ENCODE measurements at regions of chr19 and their contacts with region 1.

Region 1: DNA sequence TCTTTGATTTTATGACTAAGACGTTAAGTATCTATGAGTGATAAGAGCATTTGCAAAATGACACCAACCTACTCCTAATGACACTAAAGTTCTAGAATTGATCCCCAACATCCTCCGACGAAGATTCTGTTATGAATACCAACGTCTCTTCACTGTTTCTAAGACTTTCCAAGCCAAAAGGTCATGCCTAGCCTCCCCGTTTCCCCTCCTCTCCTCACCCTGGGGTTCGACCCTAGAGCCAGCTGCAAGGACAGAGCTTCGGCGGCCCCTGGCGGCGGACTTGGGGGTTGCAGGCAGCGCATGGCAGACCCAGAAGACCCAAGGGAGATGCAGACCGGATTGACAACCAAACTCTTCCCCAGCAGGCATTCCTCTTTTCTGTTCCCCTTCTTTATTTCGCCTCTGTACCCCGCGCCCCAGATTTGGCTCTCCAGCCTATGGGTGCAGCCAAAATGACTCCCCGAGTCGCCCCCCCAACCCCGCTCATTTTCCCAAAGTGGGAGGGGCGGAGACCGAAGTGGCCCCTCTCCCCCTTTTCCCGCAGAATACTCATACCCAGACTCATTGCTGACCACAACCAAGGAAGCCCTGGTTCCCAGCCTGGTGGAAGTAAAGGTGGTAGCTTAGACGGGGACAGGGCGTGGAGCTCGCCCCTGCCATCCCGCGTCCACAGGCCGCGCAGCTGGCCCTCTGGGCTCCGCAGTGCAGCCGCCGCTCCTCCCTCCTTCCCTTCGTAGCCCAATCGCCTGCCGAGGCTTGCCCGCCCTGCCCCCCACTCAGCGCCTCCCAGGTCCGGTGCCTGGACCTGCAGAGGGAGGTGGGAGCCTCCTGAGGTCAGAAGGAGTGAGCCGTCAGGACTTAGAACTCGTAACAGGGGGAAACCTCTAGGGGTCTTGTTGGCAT is 4.1 kb upstream of the EML2 start:
- DNase-seq: peak; percentile 96
- ATAC-seq: peak; percentile 40
- H3K4me3 Mint-ChIP-seq: peak overlapping the region; percentile 86
- H3K27ac Mint-ChIP-seq: peak overlapping the region; percentile 93
- H3K4me1 Mint-ChIP-seq: peaks cover 40% of the 10 kb centered on the region
- H3K27me3 Mint-ChIP-seq: peaks cover 24% of the 10 kb centered on the region
- CTCF ChIP-seq: peak; percentile 99

Region 2: GRCh38 chr19:45478454-45479238 is 164.6 kb before region 1 on chr19:
- CTCF ChIA-PET with region 1: interaction called, 43 read pairs
- POLR2A ChIA-PET with region 1: no interaction called
- DNase-seq: peak; percentile 90
- ATAC-seq: peak; percentile 94
- H3K4me3 Mint-ChIP-seq: peak overlapping the region; percentile 69
- H3K27ac Mint-ChIP-seq: peak overlapping the region; percentile 99
- H3K4me1 Mint-ChIP-seq: peaks cover 23% of the 10 kb centered on the region
- H3K27me3 Mint-ChIP-seq: peaks cover 47% of the 10 kb centered on the region
- CTCF ChIP-seq: peak; percentile 90

Region 3: GRCh38 chr19:45558399-45558878 is 84.8 kb before region 1 on chr19:
- CTCF ChIA-PET with region 1: interaction called, 57 read pairs
- POLR2A ChIA-PET with region 1: interaction called, 3 read pairs
- DNase-seq: peak; percentile 78
- ATAC-seq: peak; percentile 89
- H3K4me3 Mint-ChIP-seq: no peak overlapping the region
- H3K27ac Mint-ChIP-seq: no peak overlapping the region
- H3K4me1 Mint-ChIP-seq: peaks cover 12% of the 10 kb centered on the region; the same call in 1 of the 2 replicates
- H3K27me3 Mint-ChIP-seq: no peaks in the 10 kb centered on the region
- CTCF ChIP-seq: no peak

Region 4: DNA sequence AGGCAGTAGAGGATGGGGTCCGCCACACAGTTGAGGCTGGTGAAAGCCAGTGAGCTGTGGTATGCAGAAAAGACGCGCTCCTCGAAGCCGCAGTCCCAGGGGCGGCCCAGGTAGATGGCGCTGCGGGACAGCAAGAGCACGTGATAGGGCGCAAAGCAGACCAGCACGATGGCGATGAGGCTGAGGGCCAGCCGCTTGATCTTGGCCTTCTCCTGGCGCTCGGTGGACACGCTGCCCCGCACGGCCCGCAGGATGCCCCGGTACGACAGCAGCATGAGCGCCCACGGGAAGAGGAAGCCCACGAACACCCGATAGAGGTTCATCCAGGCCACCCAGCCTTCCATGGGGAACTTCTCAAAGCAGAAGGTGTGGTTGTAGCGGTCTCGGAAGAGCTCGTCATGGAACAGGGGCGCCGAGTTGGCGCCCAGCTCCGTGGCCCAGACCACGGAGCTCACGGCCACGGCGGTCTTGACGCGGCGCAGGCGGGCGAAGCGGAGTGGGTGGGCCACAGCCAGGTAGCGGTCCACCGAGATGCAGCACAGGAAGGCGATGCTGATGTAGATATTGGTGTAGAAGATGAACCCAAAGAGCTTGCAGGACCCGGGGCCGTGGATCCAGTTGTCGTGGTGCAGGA is 52.2 kb before region 1 on chr19:
- CTCF ChIA-PET with region 1: interaction called, 86 read pairs
- POLR2A ChIA-PET with region 1: interaction called, 11 read pairs
- DNase-seq: peak; percentile 84
- ATAC-seq: peak; percentile 95
- H3K4me3 Mint-ChIP-seq: no peak overlapping the region
- H3K27ac Mint-ChIP-seq: no peak overlapping the region
- H3K4me1 Mint-ChIP-seq: peaks cover 6% of the 10 kb centered on the region
- H3K27me3 Mint-ChIP-seq: peaks cover 60% of the 10 kb centered on the region
- CTCF ChIP-seq: no peak

Region 5: GRCh38 chr19:45621389-45621788 is 21.9 kb before region 1 on chr19:
- CTCF ChIA-PET with region 1: interaction called, 86 read pairs
- POLR2A ChIA-PET with region 1: interaction called, 13 read pairs
- DNase-seq: no peak
- ATAC-seq: no peak
- H3K4me3 Mint-ChIP-seq: no peak overlapping the region
- H3K27ac Mint-ChIP-seq: no peak overlapping the region
- H3K4me1 Mint-ChIP-seq: 0 out of 2 replicates have a peak, but pooled peaks cover 3% of the 10 kb centered on the region
- H3K27me3 Mint-ChIP-seq: no peaks in the 10 kb centered on the region; the same call in 1 of the 2 replicates
- CTCF ChIP-seq: no peak

Region 6: GRCh38 chr19:45692187-45693105 is 49.2 kb after region 1 on chr19 and contains the start of gene QPCTL:
- CTCF ChIA-PET with region 1: interaction called, 32 read pairs
- POLR2A ChIA-PET with region 1: interaction called, 8 read pairs
- DNase-seq: peak; percentile 97
- ATAC-seq: peak; percentile 95
- H3K4me3 Mint-ChIP-seq: peak within 1 kb of the TSS; percentile 96
- H3K27ac Mint-ChIP-seq: peak within 1 kb of the TSS; percentile 100
- H3K4me1 Mint-ChIP-seq: peaks cover 6% of the 10 kb centered on the region; the same call in 1 of the 2 replicates
- H3K27me3 Mint-ChIP-seq: peaks cover 3% of the 10 kb centered on the region; the same call in 1 of the 2 replicates
- CTCF ChIP-seq: no peak
- total RNA-seq, gene QPCTL: 23.8 to 33.3 TPM (median 27.5 TPM) in 3 replicates

Region 7: DNA sequence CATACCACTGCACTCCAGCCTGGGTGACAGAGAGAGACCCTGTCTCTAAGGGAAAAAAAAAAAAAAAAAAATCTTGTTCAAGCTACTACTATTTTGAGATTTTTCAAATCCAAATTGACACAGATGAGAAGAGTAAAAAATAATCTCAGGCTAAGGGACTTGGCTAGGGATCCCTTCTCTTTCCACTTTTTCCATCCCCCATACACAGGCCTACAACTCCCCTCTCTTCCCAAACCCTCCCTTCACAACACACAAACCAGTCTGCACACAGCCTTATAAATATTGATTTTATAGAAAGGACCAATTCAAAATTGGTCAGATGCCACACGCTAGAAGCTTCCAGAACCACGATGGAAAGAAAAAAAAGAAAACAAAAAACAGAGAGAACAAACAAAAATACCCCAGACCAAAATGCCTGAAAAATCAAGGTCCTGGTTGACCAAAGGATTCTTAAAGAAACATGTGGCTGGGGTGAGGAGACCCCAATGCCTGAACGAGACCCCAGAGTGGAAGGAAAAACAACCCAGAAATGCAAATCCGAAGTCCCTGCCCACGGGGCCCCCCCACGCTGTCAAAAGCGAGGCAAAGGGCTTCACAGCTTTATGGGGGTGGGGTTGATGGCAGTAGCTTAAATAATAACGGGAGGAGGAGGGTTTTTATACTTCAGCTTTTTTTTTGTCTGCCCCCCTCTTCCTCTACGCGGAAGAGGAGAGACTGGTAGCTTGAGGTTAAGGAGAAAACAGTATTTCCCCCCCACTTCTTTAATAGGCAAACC is 67.3 kb after region 1 on chr19:
- CTCF ChIA-PET with region 1: no interaction called
- POLR2A ChIA-PET with region 1: no interaction called
- DNase-seq: no peak
- ATAC-seq: no peak
- H3K4me3 Mint-ChIP-seq: no peak overlapping the region
- H3K27ac Mint-ChIP-seq: peak overlapping the region; percentile 58
- H3K4me1 Mint-ChIP-seq: peaks cover 15% of the 10 kb centered on the region
- H3K27me3 Mint-ChIP-seq: no peaks in the 10 kb centered on the region
- CTCF ChIP-seq: no peak

Region 8: GRCh38 chr19:46009530-46010510 is 366.5 kb after region 1 on chr19:
- CTCF ChIA-PET with region 1: no interaction called
- POLR2A ChIA-PET with region 1: no interaction called
- DNase-seq: peak; percentile 89
- ATAC-seq: peak; percentile 90
- H3K4me3 Mint-ChIP-seq: no peak overlapping the region
- H3K27ac Mint-ChIP-seq: no peak overlapping the region
- H3K4me1 Mint-ChIP-seq: peaks cover 5% of the 10 kb centered on the region
- H3K27me3 Mint-ChIP-seq: peaks cover 14% of the 10 kb centered on the region
- CTCF ChIP-seq: peak; percentile 97